GM12878 (cell line): ENCODE measurements at regions of chr17 and their contacts with region 1.

Region 1: DNA sequence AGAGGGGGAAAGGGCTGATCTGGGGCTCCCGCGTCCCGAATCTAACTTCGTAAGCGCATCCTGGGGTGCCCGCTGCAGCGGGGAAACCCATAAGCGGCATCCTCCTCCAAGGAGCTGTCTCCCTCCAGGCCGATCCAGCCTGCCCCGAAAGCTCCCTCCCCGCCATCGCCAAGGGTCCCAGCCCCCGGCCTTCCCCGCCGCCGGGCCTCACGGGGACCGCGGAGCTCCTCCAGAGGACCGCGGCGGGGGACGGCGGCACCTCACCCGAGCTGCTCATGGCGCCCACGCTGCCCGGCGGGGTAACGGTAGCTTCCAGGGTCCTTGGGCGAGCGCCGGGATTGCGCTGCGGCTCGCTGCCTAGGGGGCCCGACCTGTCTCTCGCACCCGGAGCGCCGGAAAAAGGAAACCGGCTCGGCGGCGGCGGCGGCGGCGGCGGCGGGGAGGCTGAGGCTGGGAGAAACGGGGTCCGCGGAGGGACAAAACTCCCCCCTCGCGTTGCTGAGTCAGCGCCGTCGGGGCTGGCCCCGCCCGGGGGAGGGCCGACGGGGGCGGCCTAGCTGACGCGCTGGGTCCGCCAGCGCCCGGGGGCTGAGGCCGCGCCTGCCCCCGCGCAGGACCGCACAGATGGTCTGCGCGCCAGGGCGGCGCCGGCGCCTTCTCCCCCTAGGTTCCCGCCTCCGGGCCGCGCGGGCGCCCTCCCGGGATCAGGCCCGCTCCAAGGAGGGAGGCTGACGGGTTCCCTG is at the start of gene BLMH:
- DNase-seq: no peak
- ATAC-seq: peak; percentile 94
- H3K4me3 ChIP-seq: peak within 1 kb of the TSS; percentile 92
- H3K27ac ChIP-seq: peak within 1 kb of the TSS; percentile 59
- H3K4me1 ChIP-seq: no peaks in the 10 kb centered on the region
- H3K27me3 ChIP-seq: no peaks in the 10 kb centered on the region
- CTCF ChIP-seq: no peak
- EP300 ChIP-seq: no peak
- POLR2A ChIP-seq: peak; percentile 84
- RAD21 ChIP-seq: no peak
- polyA plus RNA-seq, gene BLMH: 16.1 to 34.2 TPM

Region 2: GRCh38 chr17:30116661-30117551 is 174.8 kb before region 1 on chr17 and contains the start of gene NSRP1:
- CTCF ChIA-PET with region 1: no interaction called
- POLR2A ChIA-PET with region 1: interaction called, 13 read pairs
- RAD21 ChIA-PET with region 1: interaction called, 5 read pairs
- SMC1A ChIA-PET with region 1: interaction called, 4 read pairs
- in situ Hi-C with region 1: no loop called
- intact Hi-C with region 1: no loop called
- DNase-seq: peak; percentile 89
- ATAC-seq: peak; percentile 91
- H3K4me3 ChIP-seq: peak within 1 kb of the TSS; percentile 95
- H3K27ac ChIP-seq: peak within 1 kb of the TSS; percentile 94
- H3K4me1 ChIP-seq: peaks cover 9% of the 10 kb centered on the region
- H3K27me3 ChIP-seq: no peaks in the 10 kb centered on the region
- CTCF ChIP-seq: no peak
- EP300 ChIP-seq: no peak
- POLR2A ChIP-seq: peak; percentile 100
- RAD21 ChIP-seq: no peak
- polyA plus RNA-seq, gene NSRP1: 57.2 to 69.7 TPM

Region 3: DNA sequence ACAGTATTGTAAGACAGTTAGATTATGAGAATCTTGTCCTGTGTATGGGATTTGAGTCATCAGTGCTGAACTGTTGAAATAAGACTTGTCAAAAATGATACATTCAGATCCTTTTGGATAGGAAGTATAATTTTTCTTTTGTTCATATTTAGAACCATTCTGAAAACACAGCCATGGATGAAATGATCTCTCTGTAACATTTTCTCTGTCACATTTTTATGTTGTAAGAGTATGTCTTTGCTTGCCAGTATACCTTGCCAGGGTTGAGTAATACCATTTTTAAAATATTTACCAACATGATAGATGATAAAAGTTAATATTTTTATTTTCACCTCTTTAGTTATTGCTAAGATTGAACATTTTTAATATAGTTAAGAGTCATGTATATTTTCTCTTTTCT is 130.1 kb before region 1 on chr17:
- CTCF ChIA-PET with region 1: no interaction called
- POLR2A ChIA-PET with region 1: no interaction called
- RAD21 ChIA-PET with region 1: no interaction called
- SMC1A ChIA-PET with region 1: no interaction called
- in situ Hi-C with region 1: no loop called
- intact Hi-C with region 1: no loop called
- DNase-seq: no peak
- ATAC-seq: no peak
- H3K4me3 ChIP-seq: no peak overlapping the region
- H3K27ac ChIP-seq: no peak overlapping the region
- H3K4me1 ChIP-seq: no peaks in the 10 kb centered on the region; the same call in 1 of the 2 replicates
- H3K27me3 ChIP-seq: no peaks in the 10 kb centered on the region
- CTCF ChIP-seq: no peak
- EP300 ChIP-seq: no peak
- POLR2A ChIP-seq: no peak
- RAD21 ChIP-seq: no peak

Region 4: GRCh38 chr17:30308406-30308805 is 16.7 kb after region 1 on chr17:
- CTCF ChIA-PET with region 1: interaction called, 3 read pairs
- POLR2A ChIA-PET with region 1: interaction called, 5 read pairs
- RAD21 ChIA-PET with region 1: interaction called, 3 read pairs
- SMC1A ChIA-PET with region 1: interaction called, 11 read pairs
- in situ Hi-C with region 1: no loop called
- intact Hi-C with region 1: no loop called
- DNase-seq: no peak
- ATAC-seq: no peak
- H3K4me3 ChIP-seq: no peak overlapping the region
- H3K27ac ChIP-seq: no peak overlapping the region
- H3K4me1 ChIP-seq: no peaks in the 10 kb centered on the region
- H3K27me3 ChIP-seq: no peaks in the 10 kb centered on the region
- CTCF ChIP-seq: no peak
- EP300 ChIP-seq: no peak
- POLR2A ChIP-seq: no peak
- RAD21 ChIP-seq: no peak